Activated T-helper 2 cell treated with anti-CD3 and anti-CD28 coated beads, Interferon-gamma antibody, Interleukin-2, Interleukin-4, amounts not matched to agents 10 μg/mL and 5 μg/mL and 100 μg/mL, durations not matched to agents 14 hours and 24 hours and 36 hours (primary cell): ENCODE measurements at regions of chr5 and their contacts with region 1.

Region 1: DNA sequence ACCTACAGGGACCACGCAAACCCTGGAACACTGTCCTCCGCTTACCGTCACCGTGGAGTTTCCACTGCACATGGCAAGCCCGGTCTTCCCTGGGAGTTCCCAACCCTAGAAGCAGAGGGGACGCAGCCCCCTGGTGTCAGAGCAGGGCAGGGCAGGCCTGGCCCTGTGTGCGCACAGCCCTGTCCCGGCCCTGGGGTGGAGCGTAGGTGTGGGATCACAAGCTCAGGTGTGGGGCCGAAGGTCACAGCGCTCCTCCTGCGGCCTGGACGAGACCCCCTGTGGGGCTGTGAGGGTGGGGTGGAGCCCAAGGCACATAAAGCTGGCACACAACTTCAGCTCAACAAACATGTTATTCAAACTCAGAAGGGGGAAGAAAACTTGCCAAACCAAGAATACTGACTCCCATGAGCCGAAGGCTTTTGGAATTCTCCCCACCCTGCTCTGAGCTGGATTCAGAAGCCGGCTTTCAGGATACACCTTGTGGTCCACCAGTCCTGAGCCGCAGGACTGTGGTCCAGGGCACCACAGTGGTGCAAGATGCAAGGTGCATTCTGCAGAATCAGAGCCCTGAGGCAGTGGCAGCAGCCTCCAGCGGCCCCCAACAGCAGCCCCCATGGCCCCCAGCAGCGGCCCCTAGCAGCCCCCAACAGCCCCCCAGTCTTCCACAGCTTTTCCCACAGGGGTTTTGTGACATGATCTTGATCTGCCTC is 11.8 kb upstream of the EXOC3 start:
- DNase-seq: no peak
- H3K4me3 Mint-ChIP-seq: no peak overlapping the region
- H3K27ac Mint-ChIP-seq: no peak overlapping the region
- H3K4me1 Mint-ChIP-seq: peaks cover 4% of the 10 kb centered on the region
- H3K27me3 Mint-ChIP-seq: no peaks in the 10 kb centered on the region

Region 2: DNA sequence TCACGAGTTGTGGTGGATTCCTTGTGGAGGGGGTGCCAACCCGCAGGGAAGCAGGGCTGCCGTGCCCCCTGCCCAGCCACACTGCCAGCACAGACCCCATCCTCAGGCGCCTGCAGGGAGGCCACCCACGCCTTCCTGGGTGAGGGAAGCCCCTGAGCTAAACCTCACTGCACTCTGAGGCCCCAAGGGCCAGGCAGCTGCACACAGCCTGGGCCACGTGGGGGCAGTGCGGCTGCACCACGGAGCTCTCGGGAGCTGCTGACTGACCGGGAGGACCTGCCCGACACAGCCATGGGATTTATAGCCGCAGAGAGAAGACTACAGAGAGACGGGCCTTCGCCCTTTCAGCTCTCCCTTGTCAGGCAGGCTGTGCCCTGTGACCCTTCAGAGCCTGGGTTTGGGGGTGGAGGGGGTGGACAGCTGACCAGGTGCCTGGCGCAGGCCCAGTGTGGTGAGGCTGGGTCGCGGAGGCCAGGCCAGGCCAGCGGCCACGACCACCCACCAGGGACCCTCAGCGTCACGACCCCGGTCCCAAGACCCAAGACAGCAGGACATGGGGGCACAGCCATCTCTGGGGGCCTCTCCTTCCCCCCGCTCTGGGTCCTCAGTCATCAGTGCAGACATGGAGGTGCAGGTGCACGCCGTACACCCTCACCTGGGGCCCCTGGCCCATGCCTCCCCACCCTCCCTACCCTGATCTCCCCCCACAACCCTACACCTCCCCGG is 113.9 kb before region 1 on chr5:
- intact Hi-C with region 1: loop called (anchors 1 kb)
- DNase-seq: no peak
- H3K4me3 Mint-ChIP-seq: no peak overlapping the region
- H3K27ac Mint-ChIP-seq: no peak overlapping the region
- H3K4me1 Mint-ChIP-seq: peaks cover 4% of the 10 kb centered on the region
- H3K27me3 Mint-ChIP-seq: peaks cover 6% of the 10 kb centered on the region

Region 3: GRCh38 chr5:411728-412127 is 19.4 kb before region 1 on chr5:
- intact Hi-C with region 1: no loop called
- DNase-seq: no peak
- H3K4me3 Mint-ChIP-seq: no peak overlapping the region
- H3K27ac Mint-ChIP-seq: peak overlapping the region; percentile 69
- H3K4me1 Mint-ChIP-seq: peaks cover 33% of the 10 kb centered on the region
- H3K27me3 Mint-ChIP-seq: no peaks in the 10 kb centered on the region

Region 4: GRCh38 chr5:862367-863243 is 431.4 kb after region 1 on chr5:
- intact Hi-C with region 1: no loop called
- DNase-seq: no peak
- H3K4me3 Mint-ChIP-seq: no peak overlapping the region
- H3K27ac Mint-ChIP-seq: no peak overlapping the region
- H3K4me1 Mint-ChIP-seq: no peaks in the 10 kb centered on the region
- H3K27me3 Mint-ChIP-seq: no peaks in the 10 kb centered on the region